Activated CD4-positive, alpha-beta memory T cell treated with anti-CD3 and anti-CD28 coated beads for 36 hours (primary cell): ENCODE measurements at regions of chr3 and their contacts with region 1.

Region 1: GRCh38 chr3:53195602-53196574 is 34.9 kb downstream of the PRKCD start:
- DNase-seq: peak; percentile 66
- H3K4me3 Mint-ChIP-seq: no peak overlapping the region
- H3K27ac Mint-ChIP-seq: no peak overlapping the region
- H3K4me1 Mint-ChIP-seq: peaks cover 7% of the 10 kb centered on the region
- H3K27me3 Mint-ChIP-seq: no peaks in the 10 kb centered on the region

Region 2: GRCh38 chr3:52742418-52743041 is 453.4 kb before region 1 on chr3:
- CTCF ChIA-PET with region 1: no interaction called
- POLR2A ChIA-PET with region 1: no interaction called
- intact Hi-C with region 1: no loop called
- DNase-seq: no peak
- H3K4me3 Mint-ChIP-seq: no peak overlapping the region
- H3K27ac Mint-ChIP-seq: no peak overlapping the region
- H3K4me1 Mint-ChIP-seq: no peaks in the 10 kb centered on the region
- H3K27me3 Mint-ChIP-seq: no peaks in the 10 kb centered on the region

Region 3: DNA sequence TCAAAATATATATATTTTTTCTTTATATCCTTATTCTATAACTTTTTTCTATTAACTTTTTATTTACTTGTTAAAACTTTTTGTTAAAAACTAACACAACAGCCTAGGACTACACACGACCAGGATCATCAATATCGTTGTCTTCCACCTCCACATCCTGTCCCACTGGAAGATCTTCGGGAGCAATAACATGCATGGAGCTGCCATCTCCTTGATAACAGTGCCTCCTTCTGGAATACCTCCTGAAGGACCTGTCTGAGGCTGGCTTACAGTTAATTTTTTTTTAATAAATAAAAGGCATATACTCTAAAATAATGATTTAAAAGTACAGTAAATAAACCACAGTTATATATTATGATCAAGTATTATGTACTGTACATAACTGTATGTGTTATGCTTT is 208.9 kb before region 1 on chr3:
- CTCF ChIA-PET with region 1: no interaction called
- POLR2A ChIA-PET with region 1: no interaction called
- intact Hi-C with region 1: no loop called
- DNase-seq: no peak
- H3K4me3 Mint-ChIP-seq: no peak overlapping the region
- H3K27ac Mint-ChIP-seq: no peak overlapping the region
- H3K4me1 Mint-ChIP-seq: peaks cover 53% of the 10 kb centered on the region
- H3K27me3 Mint-ChIP-seq: no peaks in the 10 kb centered on the region

Region 4: DNA sequence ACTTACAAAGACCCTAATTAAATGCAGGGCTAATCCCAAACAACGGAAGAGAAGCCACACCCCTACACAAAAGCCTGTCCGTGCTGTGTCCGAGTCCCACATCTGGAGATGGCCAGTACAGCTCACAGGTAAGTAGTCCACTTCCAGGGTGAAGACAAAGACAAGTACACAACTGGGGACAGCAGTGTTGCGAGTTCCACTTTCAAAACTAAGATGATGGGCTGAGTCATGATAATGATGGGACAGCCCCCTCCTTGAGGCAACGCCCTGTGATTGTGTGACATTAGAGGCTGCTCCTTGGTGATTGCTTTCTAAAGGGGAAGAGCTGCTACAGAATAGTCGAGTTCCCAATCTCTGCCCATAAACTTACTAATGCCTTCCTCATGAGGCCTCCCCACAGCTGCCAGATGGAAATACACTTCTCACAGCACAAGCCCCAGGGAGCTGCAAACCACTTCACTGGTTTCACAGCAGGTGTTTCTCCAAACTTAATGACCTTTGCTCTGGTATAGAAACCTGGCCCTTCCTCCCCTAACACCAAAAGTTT is 93.2 kb before region 1 on chr3:
- CTCF ChIA-PET with region 1: interaction called, 93 read pairs
- POLR2A ChIA-PET with region 1: no interaction called
- intact Hi-C with region 1: no loop called
- DNase-seq: peak; percentile 77
- H3K4me3 Mint-ChIP-seq: peak overlapping the region; percentile 38
- H3K27ac Mint-ChIP-seq: peak overlapping the region; percentile 83
- H3K4me1 Mint-ChIP-seq: peaks cover 60% of the 10 kb centered on the region
- H3K27me3 Mint-ChIP-seq: no peaks in the 10 kb centered on the region

Region 5: DNA sequence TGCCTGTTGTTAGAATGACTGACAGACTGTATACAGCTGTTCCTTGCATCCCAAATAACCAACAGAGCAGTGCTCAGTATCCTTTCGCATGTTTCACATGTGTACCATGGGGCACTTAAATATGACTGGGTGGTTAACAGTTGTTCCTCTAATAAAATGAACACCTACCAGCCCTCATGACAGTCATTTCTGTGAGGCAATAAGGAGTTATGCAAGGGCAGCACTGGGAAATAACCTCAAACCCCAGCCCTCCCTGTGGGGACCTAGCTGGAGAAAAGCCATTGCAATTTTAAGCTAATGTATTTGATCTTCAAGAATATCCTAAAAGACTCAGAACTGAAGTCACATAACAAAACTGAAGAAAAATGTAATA is 73.0 kb before region 1 on chr3:
- CTCF ChIA-PET with region 1: interaction called, 124 read pairs
- POLR2A ChIA-PET with region 1: no interaction called
- intact Hi-C with region 1: no loop called
- DNase-seq: no peak
- H3K4me3 Mint-ChIP-seq: no peak overlapping the region
- H3K27ac Mint-ChIP-seq: no peak overlapping the region
- H3K4me1 Mint-ChIP-seq: no peaks in the 10 kb centered on the region
- H3K27me3 Mint-ChIP-seq: no peaks in the 10 kb centered on the region

Region 6: GRCh38 chr3:53130179-53131061 is 65.5 kb before region 1 on chr3 and contains the start of gene RFT1:
- CTCF ChIA-PET with region 1: interaction called, 141 read pairs
- POLR2A ChIA-PET with region 1: interaction called, 3 read pairs
- intact Hi-C with region 1: loop called (anchors 1 kb)
- DNase-seq: peak; percentile 99
- H3K4me3 Mint-ChIP-seq: peak within 1 kb of the TSS; percentile 95
- H3K27ac Mint-ChIP-seq: peak within 1 kb of the TSS; percentile 97
- H3K4me1 Mint-ChIP-seq: peaks cover 21% of the 10 kb centered on the region
- H3K27me3 Mint-ChIP-seq: no peaks in the 10 kb centered on the region
- total RNA-seq, gene RFT1: 35.0 to 38.2 TPM

Region 7: DNA sequence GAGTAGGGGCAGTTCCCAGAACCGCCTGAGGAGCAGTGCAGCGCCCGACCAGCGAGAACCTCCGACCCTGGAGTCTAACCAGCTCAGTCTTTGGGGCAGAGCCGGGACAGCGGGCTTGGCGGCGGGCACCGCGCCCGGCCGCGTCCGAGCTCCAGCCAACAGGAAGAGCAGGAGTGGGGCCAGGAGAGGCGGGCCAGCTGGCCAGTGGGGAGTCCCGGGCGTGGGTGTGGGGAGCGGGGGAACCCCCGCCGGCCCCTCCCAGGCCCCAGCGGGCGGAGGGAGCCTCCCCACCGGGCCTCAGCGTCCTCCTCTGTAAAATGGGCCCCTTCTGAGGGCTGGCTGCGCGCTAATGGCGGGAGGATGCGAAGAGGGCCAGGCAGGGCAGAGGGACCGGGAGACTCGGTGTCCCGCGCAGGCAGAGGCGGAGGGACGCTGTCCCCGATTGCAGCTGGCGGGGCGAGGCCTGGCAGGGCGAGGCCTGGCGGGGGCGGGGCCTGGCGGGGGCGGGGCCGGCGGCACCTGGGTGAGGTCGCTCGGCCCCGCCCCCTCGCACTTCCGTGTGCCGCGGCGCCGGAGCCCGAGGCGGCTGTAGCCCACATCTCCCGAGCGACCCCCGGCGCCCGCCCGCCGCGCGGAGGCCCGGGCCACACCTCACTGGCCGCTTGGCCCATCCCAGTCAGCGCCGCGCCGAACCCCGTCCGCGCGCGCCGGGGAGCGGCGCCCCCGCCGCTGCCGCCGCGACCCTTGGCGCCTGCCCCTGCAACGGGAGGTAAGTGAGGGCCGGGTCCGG is 35.0 kb before region 1 on chr3 and contains the start of gene PRKCD:
- CTCF ChIA-PET with region 1: interaction called, 25 read pairs
- POLR2A ChIA-PET with region 1: no interaction called
- intact Hi-C with region 1: no loop called
- DNase-seq: peak; percentile 85
- H3K4me3 Mint-ChIP-seq: peak within 1 kb of the TSS; percentile 78
- H3K27ac Mint-ChIP-seq: peak within 1 kb of the TSS; percentile 57
- H3K4me1 Mint-ChIP-seq: peaks cover 19% of the 10 kb centered on the region
- H3K27me3 Mint-ChIP-seq: peaks cover 15% of the 10 kb centered on the region
- total RNA-seq, gene PRKCD: 23.8 to 25.9 TPM

Region 8: DNA sequence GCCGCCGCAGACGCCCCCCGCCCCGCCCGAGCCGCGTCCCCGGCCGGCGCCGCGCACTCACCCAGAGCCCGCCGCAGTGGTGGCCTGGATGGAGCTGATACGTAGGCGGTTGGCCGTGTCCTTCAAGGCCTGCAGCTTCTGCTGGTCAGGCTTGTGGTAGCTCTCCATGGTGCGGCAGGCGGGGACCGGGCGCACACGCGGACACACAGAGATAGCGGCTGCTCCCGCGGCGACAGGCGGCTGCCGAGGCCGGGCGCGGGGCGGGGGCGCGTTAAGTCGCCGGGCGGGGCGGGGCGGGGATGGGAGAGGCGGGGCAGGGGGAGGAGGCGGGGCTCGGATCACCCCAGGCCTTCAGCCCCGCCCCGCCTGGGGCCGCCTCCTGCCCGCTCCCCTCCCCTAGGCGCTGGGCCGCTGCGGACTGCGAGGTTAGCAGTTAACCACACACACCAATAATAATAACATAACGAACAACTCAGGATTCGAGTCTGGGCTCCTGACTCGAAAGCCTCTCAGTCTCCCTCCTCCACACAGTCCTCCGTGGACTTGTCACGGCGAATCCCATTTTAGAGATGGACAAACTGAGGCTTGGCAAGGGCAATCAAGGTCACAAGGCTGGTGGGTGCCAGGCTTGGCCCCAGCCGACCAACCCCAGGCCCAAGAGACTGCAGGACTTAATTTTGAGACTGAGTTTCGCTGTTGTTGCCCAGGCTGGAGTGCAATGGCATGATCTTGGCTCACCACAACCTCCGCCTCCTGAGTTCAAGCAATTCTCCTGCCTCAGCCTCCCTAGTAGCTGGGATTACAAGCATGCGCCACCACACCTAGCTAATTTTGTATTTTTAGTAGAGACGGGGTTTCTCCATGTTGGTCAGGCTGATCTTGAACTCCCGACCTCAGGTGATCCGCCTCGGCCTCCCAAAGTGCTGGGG is 60.2 kb after region 1 on chr3 and contains the start of gene TKT:
- CTCF ChIA-PET with region 1: interaction called, 6 read pairs
- POLR2A ChIA-PET with region 1: interaction called, 4 read pairs
- intact Hi-C with region 1: loop called (anchors 2 kb)
- DNase-seq: peak; percentile 88
- H3K4me3 Mint-ChIP-seq: peak within 1 kb of the TSS; percentile 94
- H3K27ac Mint-ChIP-seq: peak within 1 kb of the TSS; percentile 78
- H3K4me1 Mint-ChIP-seq: peaks cover 27% of the 10 kb centered on the region
- H3K27me3 Mint-ChIP-seq: no peaks in the 10 kb centered on the region
- total RNA-seq, gene TKT: 252 to 254 TPM

Region 9: DNA sequence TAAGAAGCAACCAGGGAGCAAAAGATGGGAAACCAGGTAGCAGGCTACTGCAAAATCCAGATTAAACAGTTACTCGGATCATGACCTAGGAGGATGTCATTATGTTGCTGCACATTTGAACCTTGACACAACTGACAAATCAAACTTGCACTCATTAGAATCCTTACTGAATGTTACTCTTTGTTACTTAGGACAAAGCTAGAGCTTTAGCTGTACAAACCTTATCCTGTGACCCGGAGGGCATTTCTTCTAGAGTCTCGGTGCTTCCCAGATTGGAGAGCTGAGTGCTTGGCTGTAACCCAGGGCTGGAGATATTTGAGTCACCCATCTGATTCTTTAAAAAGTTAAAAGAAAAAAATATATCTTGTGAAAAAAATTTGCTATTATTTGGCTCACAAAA is 108.1 kb after region 1 on chr3:
- CTCF ChIA-PET with region 1: no interaction called
- POLR2A ChIA-PET with region 1: no interaction called
- intact Hi-C with region 1: no loop called
- DNase-seq: no peak
- H3K4me3 Mint-ChIP-seq: no peak overlapping the region
- H3K27ac Mint-ChIP-seq: no peak overlapping the region
- H3K4me1 Mint-ChIP-seq: no peaks in the 10 kb centered on the region
- H3K27me3 Mint-ChIP-seq: no peaks in the 10 kb centered on the region